CD14-positive monocyte (primary cell): ENCODE measurements at regions of chr6 and their contacts with region 1.

Region 1: DNA sequence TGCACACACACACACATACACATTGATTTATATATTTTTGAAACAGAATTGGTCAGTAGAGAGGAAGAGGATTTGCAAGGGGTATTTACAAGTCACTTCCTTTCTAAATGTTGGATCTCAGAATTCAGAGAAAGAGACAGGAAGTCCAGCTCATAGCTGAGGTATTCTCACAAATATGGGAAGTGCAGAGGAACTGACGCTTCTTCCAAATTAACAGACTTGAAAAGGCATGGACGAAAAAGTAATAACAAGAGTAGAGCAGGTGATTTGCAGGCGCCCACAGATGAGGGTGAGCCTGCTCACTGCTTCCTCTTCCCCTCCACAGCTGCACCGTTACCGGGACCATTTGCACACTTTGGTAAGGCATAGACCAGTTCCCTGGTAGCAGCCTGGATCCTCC is 246.4 kb downstream of the PHACTR1 start:
- DNase-seq: peak; percentile 16 to 44 (median 37)
- H3K4me3 ChIP-seq: peak overlapping the region in 2 of 3 experiments; percentile 9 to 47
- H3K4me3 Mint-ChIP-seq: peak overlapping the region; percentile 34 to 79
- H3K27ac ChIP-seq: peak overlapping the region in 1 of 2 donors; percentile 1
- H3K27ac Mint-ChIP-seq: peak overlapping the region in 5 of 7 donors; percentile 31 to 79 (median 70)
- H3K4me1 ChIP-seq: peaks cover 32 to 42% of the 10 kb centered on the region in 2 donors
- H3K4me1 Mint-ChIP-seq: peaks cover 40% of the 10 kb centered on the region
- H3K27me3 ChIP-seq: no peaks in the 10 kb centered on the region
- H3K27me3 Mint-ChIP-seq: peaks cover 0 to 2% (median 0%) of the 10 kb centered on the region in 3 donors
- CTCF ChIP-seq: no peak

Region 2: GRCh38 chr6:12911387-12911960 is 51.5 kb before region 1 on chr6:
- intact Hi-C with region 1: loop called in 1 of 2 experiments (anchors 5 kb)
- DNase-seq: peak in 2 of 3 donors; percentile 9 to 34
- H3K4me3 ChIP-seq: no peak overlapping the region
- H3K4me3 Mint-ChIP-seq: no peak overlapping the region
- H3K27ac ChIP-seq: no peak overlapping the region
- H3K27ac Mint-ChIP-seq: no peak overlapping the region
- H3K4me1 ChIP-seq: peaks cover 11 to 16% of the 10 kb centered on the region in 2 donors
- H3K4me1 Mint-ChIP-seq: peaks cover 19% of the 10 kb centered on the region
- H3K27me3 ChIP-seq: no peaks in the 10 kb centered on the region
- H3K27me3 Mint-ChIP-seq: peaks cover 0 to 3% (median 0%) of the 10 kb centered on the region in 3 donors
- CTCF ChIP-seq: peak; percentile 54

Region 3: GRCh38 chr6:13006578-13007300 is 43.8 kb after region 1 on chr6:
- intact Hi-C with region 1: no loop called
- DNase-seq: no peak
- H3K4me3 ChIP-seq: no peak overlapping the region
- H3K4me3 Mint-ChIP-seq: no peak overlapping the region
- H3K27ac ChIP-seq: no peak overlapping the region
- H3K27ac Mint-ChIP-seq: no peak overlapping the region
- H3K4me1 ChIP-seq: peaks cover 4 to 11% of the 10 kb centered on the region in 2 donors
- H3K4me1 Mint-ChIP-seq: peaks cover 8% of the 10 kb centered on the region
- H3K27me3 ChIP-seq: no peaks in the 10 kb centered on the region
- H3K27me3 Mint-ChIP-seq: peaks cover 0 to 3% (median 1%) of the 10 kb centered on the region in 3 donors
- CTCF ChIP-seq: no peak

Region 4: GRCh38 chr6:13508711-13509705 is 546.0 kb after region 1 on chr6:
- intact Hi-C with region 1: loop called in 1 of 2 experiments (anchors 10 kb)
- DNase-seq: no peak
- H3K4me3 ChIP-seq: no peak overlapping the region
- H3K4me3 Mint-ChIP-seq: no peak overlapping the region
- H3K27ac ChIP-seq: no peak overlapping the region
- H3K27ac Mint-ChIP-seq: no peak overlapping the region
- H3K4me1 ChIP-seq: no peaks in the 10 kb centered on the region
- H3K4me1 Mint-ChIP-seq: peaks cover 6% of the 10 kb centered on the region
- H3K27me3 ChIP-seq: no peaks in the 10 kb centered on the region
- H3K27me3 Mint-ChIP-seq: peaks cover 3 to 6% (median 5%) of the 10 kb centered on the region in 3 donors
- CTCF ChIP-seq: no peak